Activated CD8-positive, alpha-beta T cell treated with anti-CD3 and anti-CD28 coated beads, Interleukin-2, amount 10 ng/mL, durations not matched to agents 7 days and 5 days (primary cell): ENCODE measurements at regions of chr11 and their contacts with region 1.

Region 1: GRCh38 chr11:130434521-130435223 is 6.3 kb upstream of the ADAMTS8 start:
- DNase-seq: peak; percentile 81
- ATAC-seq: peak; percentile 87
- H3K4me3 Mint-ChIP-seq: no peak overlapping the region
- H3K27ac Mint-ChIP-seq: no peak overlapping the region
- H3K4me1 Mint-ChIP-seq: peaks cover 38% of the 10 kb centered on the region
- H3K27me3 Mint-ChIP-seq: peaks cover 19% of the 10 kb centered on the region

Region 2: GRCh38 chr11:130213143-130213978 is 221.3 kb before region 1 on chr11:
- CTCF ChIA-PET with region 1: interaction called, 32 read pairs
- POLR2A ChIA-PET with region 1: no interaction called
- DNase-seq: peak; percentile 74
- ATAC-seq: peak; percentile 92
- H3K4me3 Mint-ChIP-seq: no peak overlapping the region
- H3K27ac Mint-ChIP-seq: no peak overlapping the region
- H3K4me1 Mint-ChIP-seq: no peaks in the 10 kb centered on the region
- H3K27me3 Mint-ChIP-seq: peaks cover 8% of the 10 kb centered on the region

Region 3: GRCh38 chr11:130407978-130408377 is 26.7 kb before region 1 on chr11:
- CTCF ChIA-PET with region 1: no interaction called
- POLR2A ChIA-PET with region 1: no interaction called
- DNase-seq: no peak
- ATAC-seq: no peak
- H3K4me3 Mint-ChIP-seq: no peak overlapping the region
- H3K27ac Mint-ChIP-seq: no peak overlapping the region
- H3K4me1 Mint-ChIP-seq: no peaks in the 10 kb centered on the region
- H3K27me3 Mint-ChIP-seq: peaks cover 10% of the 10 kb centered on the region

Region 4: DNA sequence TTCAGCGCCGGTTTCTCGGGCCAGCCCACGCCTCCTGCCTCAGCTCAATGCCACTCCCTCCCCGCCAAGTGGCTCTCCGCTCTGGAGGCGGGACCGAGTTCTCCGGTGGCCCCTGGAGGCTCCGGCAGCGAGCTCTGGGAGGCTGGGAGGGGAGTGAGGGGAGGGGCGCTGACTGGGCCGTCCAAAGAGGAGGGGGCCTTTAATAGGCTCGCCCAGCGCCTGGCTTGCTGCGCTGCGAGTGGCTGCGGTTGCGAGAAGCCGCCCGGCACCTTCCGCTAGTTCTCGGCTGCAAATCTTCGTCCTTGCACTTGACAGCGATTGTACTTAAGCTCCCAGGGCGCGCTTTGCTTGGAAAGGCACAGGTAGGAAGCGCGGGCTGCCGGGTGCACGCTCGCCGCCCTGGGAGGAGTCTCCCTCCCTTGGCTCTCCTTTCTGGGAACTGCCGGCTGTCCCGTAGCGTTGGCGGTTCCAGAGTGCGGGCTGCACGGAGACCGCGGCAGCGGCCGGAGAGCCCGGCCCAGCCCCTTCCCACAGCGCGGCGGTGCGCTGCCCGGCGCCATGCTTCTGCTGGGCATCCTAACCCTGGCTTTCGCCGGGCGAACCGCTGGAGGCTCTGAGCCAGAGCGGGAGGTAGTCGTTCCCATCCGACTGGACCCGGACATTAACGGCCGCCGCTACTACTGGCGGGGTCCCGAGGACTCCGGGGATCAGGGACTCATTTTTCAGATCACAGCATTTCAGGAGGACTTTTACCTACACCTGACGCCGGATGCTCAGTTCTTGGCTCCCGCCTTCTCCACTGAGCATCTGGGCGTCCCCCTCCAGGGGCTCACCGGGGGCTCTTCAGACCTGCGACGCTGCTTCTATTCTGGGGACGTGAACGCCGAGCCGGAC is 14.0 kb after region 1 on chr11 and contains the start of gene ADAMTS15:
- CTCF ChIA-PET with region 1: interaction called, 31 read pairs
- POLR2A ChIA-PET with region 1: no interaction called
- DNase-seq: peak; percentile 58
- ATAC-seq: peak; percentile 93
- H3K4me3 Mint-ChIP-seq: peak within 1 kb of the TSS; percentile 57
- H3K27ac Mint-ChIP-seq: no peak within 1 kb of the TSS
- H3K4me1 Mint-ChIP-seq: peaks cover 9% of the 10 kb centered on the region
- H3K27me3 Mint-ChIP-seq: peaks cover 56% of the 10 kb centered on the region
- total RNA-seq, gene ADAMTS15: 0.05 to 0.08 TPM

Region 5: GRCh38 chr11:130513132-130513531 is 78.5 kb after region 1 on chr11:
- CTCF ChIA-PET with region 1: no interaction called
- POLR2A ChIA-PET with region 1: no interaction called
- DNase-seq: no peak
- ATAC-seq: no peak
- H3K4me3 Mint-ChIP-seq: no peak overlapping the region
- H3K27ac Mint-ChIP-seq: no peak overlapping the region
- H3K4me1 Mint-ChIP-seq: no peaks in the 10 kb centered on the region
- H3K27me3 Mint-ChIP-seq: no peaks in the 10 kb centered on the region

Region 6: GRCh38 chr11:130827451-130828377 is 393.0 kb after region 1 on chr11:
- CTCF ChIA-PET with region 1: interaction called, 11 read pairs
- POLR2A ChIA-PET with region 1: no interaction called
- DNase-seq: peak; percentile 22
- ATAC-seq: no peak
- H3K4me3 Mint-ChIP-seq: no peak overlapping the region
- H3K27ac Mint-ChIP-seq: no peak overlapping the region
- H3K4me1 Mint-ChIP-seq: no peaks in the 10 kb centered on the region
- H3K27me3 Mint-ChIP-seq: peaks cover 2% of the 10 kb centered on the region

Region 7: DNA sequence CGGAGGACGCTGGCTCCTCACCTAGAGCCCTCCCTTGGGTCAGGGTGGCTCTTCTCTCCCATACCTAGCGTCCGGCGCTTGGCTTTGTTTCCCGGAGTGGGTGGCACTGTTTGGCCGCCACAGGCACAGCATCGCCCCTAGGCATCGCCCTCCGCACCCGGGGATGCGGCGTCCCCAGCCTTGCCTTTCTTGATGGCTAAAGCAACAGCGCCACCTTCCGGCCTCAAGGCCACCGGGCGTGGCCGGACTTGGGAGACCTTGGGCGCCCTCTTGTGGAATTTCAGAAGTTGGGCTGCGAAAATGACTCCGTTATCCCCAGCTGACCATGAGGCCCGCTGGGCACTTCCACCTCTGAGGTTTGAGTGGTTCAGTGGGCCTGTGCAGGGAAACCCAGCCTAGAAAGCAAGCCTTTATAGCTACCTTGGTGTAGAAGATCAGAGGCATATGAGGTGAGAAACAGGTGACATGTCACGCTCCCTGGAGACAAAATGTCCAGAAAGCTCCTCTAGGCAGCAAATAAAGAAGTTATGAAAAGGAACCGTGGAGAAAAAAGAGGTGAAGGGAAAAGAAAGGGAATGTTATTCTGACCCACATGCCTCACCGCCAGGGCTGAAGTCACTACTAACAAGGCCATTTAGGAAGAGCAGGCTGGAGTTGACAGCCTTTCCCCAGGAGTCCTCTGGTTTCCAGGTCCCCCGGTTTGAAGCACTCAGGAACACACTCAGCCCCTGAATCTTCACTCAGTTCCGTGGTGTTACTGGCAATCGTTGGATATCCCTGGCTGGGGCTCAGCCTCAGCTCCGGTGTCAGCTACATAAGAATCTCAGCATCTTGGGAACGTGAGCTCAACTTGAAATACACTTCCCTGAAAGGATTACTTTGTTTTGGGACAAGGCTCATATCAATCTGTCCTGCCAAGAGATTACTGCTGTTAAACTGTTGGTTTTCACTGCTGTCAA is 427.5 kb after region 1 on chr11:
- CTCF ChIA-PET with region 1: interaction called, 252 read pairs
- POLR2A ChIA-PET with region 1: interaction called, 10 read pairs
- DNase-seq: peak; percentile 91
- ATAC-seq: peak; percentile 94
- H3K4me3 Mint-ChIP-seq: no peak overlapping the region
- H3K27ac Mint-ChIP-seq: no peak overlapping the region
- H3K4me1 Mint-ChIP-seq: no peaks in the 10 kb centered on the region
- H3K27me3 Mint-ChIP-seq: peaks cover 3% of the 10 kb centered on the region

Region 8: DNA sequence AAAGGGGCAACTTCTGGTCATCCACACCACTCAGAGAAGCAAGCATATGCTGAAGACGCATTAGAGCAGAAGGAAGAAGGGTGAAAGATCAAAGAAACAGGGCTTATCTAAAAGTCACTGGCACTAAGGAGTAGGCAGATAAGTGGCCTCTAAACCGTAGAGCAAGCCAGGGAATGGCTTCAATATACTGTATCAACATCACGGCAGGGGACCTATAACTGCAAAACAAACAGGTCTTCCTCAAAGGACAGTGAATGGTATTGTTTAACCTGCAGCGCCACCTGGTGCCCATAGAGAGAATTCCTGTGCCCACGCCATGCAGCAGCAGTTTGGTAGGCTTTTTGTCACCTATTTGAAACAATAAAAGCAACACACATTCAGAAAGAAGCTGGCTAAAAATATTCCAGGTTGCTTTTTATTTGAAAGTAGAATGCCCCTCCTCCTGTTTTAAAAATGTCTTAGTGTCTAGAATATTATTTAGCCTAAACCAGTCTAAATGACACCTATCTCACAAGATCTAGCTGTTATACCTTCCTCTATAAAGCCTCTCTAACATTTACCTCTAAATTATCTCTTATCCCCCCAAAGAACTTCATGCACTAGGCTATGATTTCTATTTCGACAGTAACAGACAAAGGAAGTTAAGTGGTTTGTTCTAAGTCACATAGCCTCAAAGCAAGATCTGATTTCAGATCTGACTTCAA is 459.8 kb after region 1 on chr11:
- CTCF ChIA-PET with region 1: interaction called, 11 read pairs
- POLR2A ChIA-PET with region 1: no interaction called
- DNase-seq: peak; percentile 75
- ATAC-seq: peak; percentile 91
- H3K4me3 Mint-ChIP-seq: no peak overlapping the region
- H3K27ac Mint-ChIP-seq: no peak overlapping the region
- H3K4me1 Mint-ChIP-seq: no peaks in the 10 kb centered on the region
- H3K27me3 Mint-ChIP-seq: no peaks in the 10 kb centered on the region

Region 9: DNA sequence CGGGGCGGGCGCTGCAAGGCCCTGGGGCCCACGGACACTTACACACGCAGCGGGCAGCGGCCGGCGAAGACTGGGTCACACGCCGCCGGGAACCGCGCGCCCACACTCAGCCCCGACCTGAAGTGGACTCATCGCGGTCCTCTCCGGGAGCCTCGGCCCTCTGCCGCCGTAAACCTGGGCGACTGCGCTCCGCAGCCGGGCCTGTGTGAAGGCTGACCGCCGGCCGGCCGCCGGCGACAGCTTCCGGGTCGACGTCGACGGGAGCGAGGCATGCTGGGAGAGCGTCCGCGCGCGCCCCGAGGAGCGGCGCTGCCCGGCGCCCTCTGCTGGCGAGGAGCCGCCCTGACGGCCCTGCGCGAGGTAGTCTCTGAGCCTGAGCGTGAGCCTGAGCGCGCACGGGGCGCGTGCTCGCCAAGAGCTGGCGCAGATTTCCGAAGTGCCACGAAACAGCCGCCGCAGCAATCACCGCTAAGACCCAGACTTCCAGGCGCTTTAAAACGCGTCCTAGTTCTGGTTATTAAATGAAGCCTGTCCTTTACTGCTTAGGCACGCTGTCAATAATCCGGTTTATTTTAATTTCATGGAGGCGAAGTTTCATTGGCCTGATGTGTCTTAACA is 481.7 kb after region 1 on chr11 and contains the start of gene SNX19:
- CTCF ChIA-PET with region 1: interaction called, 16 read pairs
- POLR2A ChIA-PET with region 1: no interaction called
- DNase-seq: peak; percentile 91
- ATAC-seq: peak; percentile 100
- H3K4me3 Mint-ChIP-seq: peak within 1 kb of the TSS; percentile 83
- H3K27ac Mint-ChIP-seq: peak within 1 kb of the TSS; percentile 84
- H3K4me1 Mint-ChIP-seq: peaks cover 28% of the 10 kb centered on the region
- H3K27me3 Mint-ChIP-seq: peaks cover 2% of the 10 kb centered on the region
- total RNA-seq, gene SNX19: 40.7 to 41.0 TPM